ENCODE measurements at regions of chr2 and their contacts with region 1.

Region 1: GRCh38 chr2:114668415-114668814 is 226.0 kb downstream of the DPP10 start:
- DNase-seq: no peak
- ATAC-seq: no peak
- H3K4me3 ChIP-seq: no peak overlapping the region
- H3K4me3 Mint-ChIP-seq: no peak overlapping the region
- H3K27ac ChIP-seq: no peak overlapping the region
- H3K27ac Mint-ChIP-seq: no peak overlapping the region
- H3K4me1 ChIP-seq: no peaks in the 10 kb centered on the region
- H3K4me1 Mint-ChIP-seq: no peaks in the 10 kb centered on the region
- H3K27me3 ChIP-seq: no peaks in the 10 kb centered on the region
- H3K27me3 Mint-ChIP-seq: peaks cover 2% of the 10 kb centered on the region
- CTCF ChIP-seq: no peak

Region 2: DNA sequence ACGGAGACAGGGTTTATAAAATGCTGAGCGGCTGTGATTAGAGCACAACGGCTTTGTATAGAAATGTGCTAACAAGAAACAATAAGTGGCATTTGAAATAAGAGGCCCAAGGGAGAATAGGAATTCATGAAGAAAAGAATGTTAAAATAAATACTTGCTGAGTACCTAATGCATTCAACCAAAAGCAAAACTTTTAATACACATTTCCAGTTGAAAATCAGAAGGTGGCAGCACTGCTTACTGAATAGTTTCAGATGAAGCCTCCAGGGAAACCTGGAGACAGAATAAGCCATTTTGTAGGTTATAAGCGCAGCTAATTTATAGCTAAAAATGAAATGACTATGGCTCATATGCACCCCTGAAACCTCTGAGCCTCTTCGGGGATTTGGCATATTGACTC is 60.6 kb after region 1 on chr2:
- CTCF ChIA-PET with region 1: no interaction called
- POLR2A ChIA-PET with region 1: no interaction called
- intact Hi-C with region 1: loop called (anchors 2 kb)
- DNase-seq: no peak
- ATAC-seq: no peak
- H3K4me3 ChIP-seq: no peak overlapping the region
- H3K4me3 Mint-ChIP-seq: no peak overlapping the region
- H3K27ac ChIP-seq: no peak overlapping the region
- H3K27ac Mint-ChIP-seq: no peak overlapping the region
- H3K4me1 ChIP-seq: no peaks in the 10 kb centered on the region
- H3K4me1 Mint-ChIP-seq: no peaks in the 10 kb centered on the region
- H3K27me3 ChIP-seq: no peaks in the 10 kb centered on the region
- H3K27me3 Mint-ChIP-seq: no peaks in the 10 kb centered on the region
- CTCF ChIP-seq: no peak

Measured in B cell (primary cell).